ENCODE measurements at regions of chr6 and their contacts with region 1.

Region 1: DNA sequence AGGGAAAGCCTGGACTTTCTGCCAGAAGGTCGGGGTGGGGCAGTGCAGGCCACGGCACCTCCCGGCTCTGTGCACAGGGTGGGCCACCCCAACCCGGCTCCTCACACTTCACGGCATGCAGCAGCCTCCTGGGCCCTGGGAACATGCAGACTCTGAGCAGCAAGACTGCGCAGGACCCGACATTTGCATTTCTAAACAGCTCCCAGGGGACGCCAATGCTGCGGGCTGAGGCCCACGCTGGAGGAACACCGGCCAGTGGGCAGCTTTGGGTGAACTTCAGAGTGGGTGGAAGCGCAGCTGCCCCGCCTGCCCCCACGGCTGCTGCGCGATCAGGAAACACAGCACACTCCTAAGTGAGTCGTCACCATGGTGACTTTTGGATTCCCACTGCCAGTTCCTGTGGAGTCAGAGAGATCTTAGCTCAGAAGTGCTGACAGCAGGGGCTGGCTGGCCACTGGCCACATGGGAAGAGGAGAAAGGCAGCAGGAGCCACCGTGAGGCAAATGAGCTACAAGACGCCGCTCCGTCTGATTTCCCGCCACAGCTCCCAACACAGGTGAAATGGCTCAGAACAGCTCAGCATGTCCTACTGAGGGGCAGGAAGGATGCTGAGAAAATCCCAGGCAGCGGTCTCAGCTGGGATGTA is 52.1 kb downstream of the RNASET2 start:
- DNase-seq: no peak
- ATAC-seq: peak; percentile 47
- H3K4me3 Mint-ChIP-seq: no peak overlapping the region
- H3K27ac Mint-ChIP-seq: no peak overlapping the region
- H3K4me1 Mint-ChIP-seq: peaks cover 10% of the 10 kb centered on the region
- H3K27me3 Mint-ChIP-seq: no peaks in the 10 kb centered on the region
- CTCF ChIP-seq: no peak

Region 2: GRCh38 chr6:166950443-166950821 is 46.2 kb after region 1 on chr6:
- CTCF ChIA-PET with region 1: interaction called, 14 read pairs
- POLR2A ChIA-PET with region 1: no interaction called
- DNase-seq: no peak
- ATAC-seq: no peak
- H3K4me3 Mint-ChIP-seq: no peak overlapping the region
- H3K27ac Mint-ChIP-seq: peak overlapping the region; percentile 91
- H3K4me1 Mint-ChIP-seq: peaks cover 29% of the 10 kb centered on the region
- H3K27me3 Mint-ChIP-seq: peaks cover 6% of the 10 kb centered on the region
- CTCF ChIP-seq: no peak